ENCODE measurements at regions of chr19 and their contacts with region 1.

Region 1: DNA sequence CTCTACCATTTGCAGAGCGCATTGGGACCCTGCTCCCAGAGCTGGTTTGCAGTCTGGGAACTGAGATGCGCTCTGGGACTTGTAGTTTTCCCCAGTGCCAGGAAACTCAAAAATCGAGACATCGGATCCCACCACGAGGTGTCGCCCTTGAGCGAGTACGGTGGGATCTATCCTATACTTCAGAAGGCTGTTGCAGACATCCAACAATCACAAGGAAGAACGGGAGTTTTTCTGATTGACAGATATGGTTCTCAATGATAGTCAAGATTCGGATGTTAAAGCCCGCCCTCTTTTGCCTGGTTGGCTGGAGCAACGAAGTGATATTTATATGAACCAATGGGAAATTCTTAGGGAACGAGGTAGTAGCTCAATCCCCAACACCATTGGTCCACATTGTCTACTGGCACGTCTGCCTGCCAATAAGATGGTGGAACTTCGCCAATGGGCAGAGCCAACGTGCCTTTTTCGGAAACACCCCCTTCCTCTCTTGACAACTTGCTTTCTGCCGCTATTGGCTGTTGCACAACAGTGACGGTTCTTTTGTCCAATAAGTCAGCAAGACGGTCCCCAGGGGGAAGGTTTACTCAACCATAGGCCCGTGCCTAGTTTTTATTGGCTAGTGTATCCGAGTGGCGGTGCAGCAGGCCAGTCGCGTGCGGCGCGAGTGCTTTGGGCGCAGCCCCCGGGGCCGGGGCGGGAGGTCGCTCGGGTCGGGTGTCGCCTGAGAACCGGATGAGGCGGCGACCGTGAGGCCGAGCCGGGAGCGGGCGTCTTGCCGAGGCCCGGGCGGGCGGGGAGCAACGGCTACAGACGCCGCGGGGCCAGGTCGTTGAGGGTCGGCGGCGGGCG is at the start of gene DNM2:
- DNase-seq: peak; percentile 99
- H3K4me3 ChIP-seq: peak within 1 kb of the TSS; percentile 96
- H3K27ac ChIP-seq: peak within 1 kb of the TSS; percentile 97
- H3K4me1 ChIP-seq: peaks cover 10% of the 10 kb centered on the region
- H3K27me3 ChIP-seq: no peaks in the 10 kb centered on the region
- CTCF ChIP-seq: peak; percentile 76
- total RNA-seq, gene DNM2: 450 to 461 TPM

Region 2: DNA sequence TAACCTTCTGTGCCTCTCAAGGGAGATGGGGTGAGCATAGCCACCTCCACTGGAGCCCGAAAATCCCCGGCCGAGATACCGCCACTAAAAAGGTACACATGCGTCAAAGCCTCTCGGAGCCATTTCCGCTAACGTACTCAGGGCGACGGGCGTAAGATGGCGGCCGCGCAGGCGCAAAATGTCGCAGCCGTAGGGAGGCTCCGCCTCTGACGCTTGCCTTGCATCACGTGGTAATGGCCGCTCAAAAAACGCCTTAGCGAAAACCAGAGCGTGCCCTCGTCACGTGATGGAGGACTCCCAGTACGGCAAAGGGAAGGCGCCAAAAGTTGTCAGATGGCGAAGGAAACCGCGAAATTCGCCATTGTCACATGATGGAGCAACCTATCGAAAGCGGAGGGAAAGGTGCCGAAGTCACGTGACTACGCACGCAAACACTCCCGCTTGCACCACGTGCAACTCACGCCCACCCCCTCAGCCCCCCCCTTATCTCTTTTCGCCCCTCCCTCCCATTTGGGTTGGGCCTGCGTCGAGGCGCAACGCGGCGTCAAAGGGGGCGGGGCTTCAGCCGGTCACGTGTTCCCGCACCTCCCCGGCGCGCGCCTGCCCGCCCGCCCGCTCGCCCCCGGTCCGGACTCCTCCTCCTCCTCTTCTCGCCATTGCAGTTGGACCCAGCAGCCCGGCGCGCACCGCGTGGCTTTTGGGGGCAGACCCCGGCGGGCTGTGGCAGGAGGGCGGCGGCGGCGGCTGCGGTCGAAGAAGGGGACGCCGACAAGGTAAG is 63.7 kb before region 1 on chr19 and contains the start of gene ILF3:
- intact Hi-C with region 1: no loop called
- DNase-seq: peak; percentile 99
- H3K4me3 ChIP-seq: peak within 1 kb of the TSS; percentile 98
- H3K27ac ChIP-seq: peak within 1 kb of the TSS; percentile 95
- H3K4me1 ChIP-seq: peaks cover 9% of the 10 kb centered on the region
- H3K27me3 ChIP-seq: no peaks in the 10 kb centered on the region
- CTCF ChIP-seq: no peak
- total RNA-seq, gene ILF3: 143 to 271 TPM

Region 3: GRCh38 chr19:10769533-10770491 is 52.2 kb after region 1 on chr19:
- intact Hi-C with region 1: loop called (anchors 2 kb)
- DNase-seq: no peak
- H3K4me3 ChIP-seq: no peak overlapping the region
- H3K27ac ChIP-seq: peak overlapping the region; percentile 13
- H3K4me1 ChIP-seq: peaks cover 26% of the 10 kb centered on the region
- H3K27me3 ChIP-seq: no peaks in the 10 kb centered on the region
- CTCF ChIP-seq: no peak

Region 4: GRCh38 chr19:10812902-10813404 is 95.4 kb after region 1 on chr19:
- intact Hi-C with region 1: no loop called
- DNase-seq: no peak
- H3K4me3 ChIP-seq: no peak overlapping the region
- H3K27ac ChIP-seq: peak overlapping the region; percentile 37
- H3K4me1 ChIP-seq: no peaks in the 10 kb centered on the region
- H3K27me3 ChIP-seq: no peaks in the 10 kb centered on the region
- CTCF ChIP-seq: no peak

Region 5: GRCh38 chr19:10864538-10864899 is 146.9 kb after region 1 on chr19:
- intact Hi-C with region 1: loop called (anchors 2 kb)
- DNase-seq: peak; percentile 92
- H3K4me3 ChIP-seq: no peak overlapping the region
- H3K27ac ChIP-seq: no peak overlapping the region
- H3K4me1 ChIP-seq: peaks cover 8% of the 10 kb centered on the region
- H3K27me3 ChIP-seq: no peaks in the 10 kb centered on the region
- CTCF ChIP-seq: peak; percentile 87

Measured in colonic mucosa (tissue), 4 donors.